Upper lobe of right lung (tissue), 1 donor: ENCODE measurements at regions of chr3 and their contacts with region 1.

Region 1: DNA sequence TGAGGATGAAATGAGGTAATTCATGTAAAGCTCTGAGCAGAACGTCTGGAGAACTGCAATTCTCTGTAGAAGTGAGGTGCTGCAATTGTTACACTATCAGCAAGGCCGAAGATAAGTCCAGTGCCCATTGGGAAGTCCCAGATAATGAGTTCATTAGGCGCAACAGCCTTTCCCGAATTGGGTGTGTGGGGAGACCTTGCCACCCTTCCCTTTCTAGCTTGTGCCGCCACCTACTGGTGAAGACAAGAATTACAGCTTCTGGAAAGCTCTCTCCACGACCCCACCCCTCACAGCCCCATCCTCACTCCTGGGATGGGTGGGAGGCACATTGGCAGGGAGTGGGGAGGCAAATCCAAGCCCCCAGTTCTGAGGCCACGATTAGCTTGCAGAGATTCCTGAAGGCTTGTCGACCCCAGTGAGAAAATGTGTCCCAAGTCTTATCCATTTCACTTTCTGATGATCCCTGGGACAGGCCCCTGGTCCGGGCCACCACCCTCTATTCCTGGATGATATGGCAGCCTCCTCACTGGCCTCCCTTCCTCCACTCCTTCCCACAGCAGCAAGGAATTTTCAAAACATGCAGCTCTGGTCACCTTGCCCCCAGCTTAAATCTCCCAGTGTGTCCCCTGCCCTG is 36.4 kb downstream of the FAM3D start:
- DNase-seq: no peak
- ATAC-seq: peak; percentile 78
- H3K4me3 ChIP-seq: no peak overlapping the region
- H3K27ac ChIP-seq: no peak overlapping the region
- H3K4me1 ChIP-seq: peaks cover 33% of the 10 kb centered on the region
- H3K27me3 ChIP-seq: peaks cover 12% of the 10 kb centered on the region
- CTCF ChIP-seq: peak; percentile 94

Region 2: DNA sequence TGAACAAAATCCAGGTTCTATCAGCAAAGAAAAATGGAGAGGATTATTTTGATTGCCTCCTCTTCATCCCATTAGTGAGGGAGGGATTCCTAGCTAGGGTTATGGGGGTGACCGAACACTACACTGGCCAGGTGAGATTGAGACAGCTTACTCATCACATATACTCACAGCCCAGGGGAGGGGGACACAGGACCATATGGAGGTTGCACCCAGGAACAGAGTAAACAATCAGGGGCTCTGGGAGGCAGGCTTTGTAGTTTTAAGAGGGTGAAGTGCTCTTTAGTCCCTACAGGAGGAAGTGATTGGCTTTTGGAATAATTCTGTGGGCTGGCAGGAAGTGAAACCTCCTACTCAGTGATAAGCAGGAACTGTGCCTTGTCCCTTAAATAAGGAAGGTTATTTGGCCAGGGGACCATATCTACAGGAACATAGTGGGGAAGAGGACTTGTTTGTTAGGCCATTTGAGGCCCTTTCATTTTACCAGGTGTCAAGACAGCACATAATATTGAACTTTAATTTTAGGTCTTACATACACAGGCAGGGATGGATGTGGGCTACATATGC is 155.8 kb before region 1 on chr3:
- intact Hi-C with region 1: no loop called
- DNase-seq: no peak
- ATAC-seq: peak; percentile 83
- H3K4me3 ChIP-seq: no peak overlapping the region
- H3K27ac ChIP-seq: no peak overlapping the region
- H3K4me1 ChIP-seq: peaks cover 25% of the 10 kb centered on the region
- H3K27me3 ChIP-seq: no peaks in the 10 kb centered on the region
- CTCF ChIP-seq: no peak

Region 3: GRCh38 chr3:58497097-58497496 is 133.1 kb before region 1 on chr3:
- intact Hi-C with region 1: no loop called
- DNase-seq: no peak
- ATAC-seq: no peak
- H3K4me3 ChIP-seq: no peak overlapping the region
- H3K27ac ChIP-seq: no peak overlapping the region
- H3K4me1 ChIP-seq: peaks cover 19% of the 10 kb centered on the region
- H3K27me3 ChIP-seq: no peaks in the 10 kb centered on the region
- CTCF ChIP-seq: no peak

Region 4: GRCh38 chr3:58568572-58569286 is 61.5 kb before region 1 on chr3:
- intact Hi-C with region 1: loop called (anchors 5 kb)
- DNase-seq: peak; percentile 84
- ATAC-seq: peak; percentile 87
- H3K4me3 ChIP-seq: no peak overlapping the region
- H3K27ac ChIP-seq: no peak overlapping the region
- H3K4me1 ChIP-seq: peaks cover 4% of the 10 kb centered on the region
- H3K27me3 ChIP-seq: no peaks in the 10 kb centered on the region
- CTCF ChIP-seq: peak; percentile 98

Region 5: GRCh38 chr3:59043391-59043790 is 413.2 kb after region 1 on chr3:
- intact Hi-C with region 1: no loop called
- DNase-seq: no peak
- ATAC-seq: no peak
- H3K4me3 ChIP-seq: no peak overlapping the region
- H3K27ac ChIP-seq: no peak overlapping the region
- H3K4me1 ChIP-seq: no peaks in the 10 kb centered on the region
- H3K27me3 ChIP-seq: no peaks in the 10 kb centered on the region
- CTCF ChIP-seq: no peak